ENCODE measurements at regions of chr3 and their contacts with region 1.

Region 1: GRCh38 chr3:38479431-38480092 is 16.6 kb upstream of the EXOG start:
- DNase-seq: peak; percentile 59 to 82 (median 79)
- ATAC-seq: peak; percentile 77 to 81
- H3K4me3 ChIP-seq: no peak overlapping the region
- H3K27ac ChIP-seq: no peak overlapping the region
- H3K4me1 ChIP-seq: no peaks in the 10 kb centered on the region
- H3K27me3 ChIP-seq: no peaks in the 10 kb centered on the region

Region 2: DNA sequence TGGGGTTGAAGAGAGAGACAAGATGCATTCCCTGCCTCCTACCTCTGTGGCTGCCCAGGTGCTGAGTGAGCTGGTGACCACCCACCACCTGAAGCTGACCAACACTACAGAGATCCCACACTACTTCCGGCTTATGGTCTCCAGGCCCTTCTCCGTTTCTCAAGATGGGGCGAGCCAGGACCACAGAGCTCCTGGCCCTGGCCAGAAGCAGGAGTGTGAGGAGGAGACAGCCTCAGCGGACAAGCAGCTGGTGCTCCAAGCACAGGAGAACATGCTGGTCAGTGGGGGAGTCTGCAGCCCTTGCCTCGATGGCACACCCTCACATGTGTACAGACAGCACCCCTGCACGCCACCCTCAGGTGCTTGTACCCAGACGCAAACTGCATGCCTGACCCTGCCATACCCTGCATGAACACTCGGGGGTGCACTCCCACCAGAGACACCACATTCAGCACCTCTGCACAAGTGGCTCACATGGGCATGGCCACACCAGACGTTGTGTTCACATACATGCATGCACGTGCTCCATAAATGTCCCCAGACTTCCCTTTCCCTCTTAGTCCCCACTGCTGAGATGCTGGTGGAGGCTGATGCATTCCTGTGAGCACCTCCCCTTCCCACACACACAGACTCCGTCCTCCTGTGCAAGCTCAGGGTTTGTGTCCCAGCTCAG is 361.7 kb before region 1 on chr3:
- intact Hi-C with region 1: loop called in 3 of 4 experiments (anchors 5 to 10 kb)
- DNase-seq: peak; percentile 58 to 81 (median 79)
- ATAC-seq: peak; percentile 64 to 71
- H3K4me3 ChIP-seq: no peak overlapping the region
- H3K27ac ChIP-seq: no peak overlapping the region
- H3K4me1 ChIP-seq: no peaks in the 10 kb centered on the region
- H3K27me3 ChIP-seq: no peaks in the 10 kb centered on the region

Region 3: GRCh38 chr3:38317155-38317759 is 162.3 kb before region 1 on chr3:
- intact Hi-C with region 1: no loop called
- DNase-seq: no peak
- ATAC-seq: peak in 1 of 2 donors; percentile 11
- H3K4me3 ChIP-seq: no peak overlapping the region
- H3K27ac ChIP-seq: no peak overlapping the region
- H3K4me1 ChIP-seq: no peaks in the 10 kb centered on the region
- H3K27me3 ChIP-seq: no peaks in the 10 kb centered on the region

Region 4: GRCh38 chr3:38346587-38347410 is 132.8 kb before region 1 on chr3 and contains the start of gene XYLB:
- intact Hi-C with region 1: loop called (anchors 2 to 10 kb)
- DNase-seq: peak; percentile 91 to 96 (median 95)
- ATAC-seq: peak; percentile 99
- H3K4me3 ChIP-seq: peak within 1 kb of the TSS; percentile 66
- H3K27ac ChIP-seq: no peak within 1 kb of the TSS
- H3K4me1 ChIP-seq: no peaks in the 10 kb centered on the region
- H3K27me3 ChIP-seq: no peaks in the 10 kb centered on the region
- total RNA-seq, gene XYLB: 0.37 to 1.3 (median 0.83) TPM

Region 5: DNA sequence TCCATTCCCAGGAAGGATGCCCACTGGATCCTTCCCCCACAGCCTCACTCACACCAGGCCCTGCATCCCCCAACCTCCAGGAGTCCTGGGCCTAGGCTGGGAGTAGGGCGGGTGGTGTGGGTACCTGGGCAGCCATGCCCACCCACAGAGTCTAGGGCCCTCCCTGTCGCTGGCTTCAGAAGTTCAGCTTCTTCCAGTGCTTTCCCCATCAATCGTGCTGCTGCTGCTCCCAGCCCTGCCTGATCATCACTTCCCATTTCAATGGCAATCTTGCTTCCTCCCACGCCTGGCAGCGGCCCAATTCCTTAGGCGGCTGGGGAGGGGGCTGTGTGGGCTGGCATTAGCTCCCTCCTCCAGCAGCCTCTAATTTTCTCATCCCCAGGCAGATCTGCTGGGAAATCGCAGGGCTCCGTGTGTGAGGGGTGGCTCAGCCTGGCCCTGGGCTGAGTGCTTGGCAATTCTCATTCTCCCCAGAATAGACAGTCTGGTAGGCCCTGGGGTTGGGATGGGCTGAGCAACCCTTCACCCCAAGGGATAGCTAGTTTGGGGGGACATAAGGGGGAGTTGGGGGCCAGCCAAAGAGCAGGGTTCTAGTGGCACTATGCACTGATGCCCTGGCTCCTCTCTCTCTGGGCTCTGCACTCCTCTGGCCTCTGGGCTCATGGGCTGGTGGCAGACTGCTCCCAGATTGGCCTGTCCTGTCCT is 103.5 kb after region 1 on chr3:
- intact Hi-C with region 1: no loop called
- DNase-seq: no peak
- ATAC-seq: no peak
- H3K4me3 ChIP-seq: no peak overlapping the region
- H3K27ac ChIP-seq: no peak overlapping the region
- H3K4me1 ChIP-seq: peaks cover 11% of the 10 kb centered on the region
- H3K27me3 ChIP-seq: no peaks in the 10 kb centered on the region

Region 6: DNA sequence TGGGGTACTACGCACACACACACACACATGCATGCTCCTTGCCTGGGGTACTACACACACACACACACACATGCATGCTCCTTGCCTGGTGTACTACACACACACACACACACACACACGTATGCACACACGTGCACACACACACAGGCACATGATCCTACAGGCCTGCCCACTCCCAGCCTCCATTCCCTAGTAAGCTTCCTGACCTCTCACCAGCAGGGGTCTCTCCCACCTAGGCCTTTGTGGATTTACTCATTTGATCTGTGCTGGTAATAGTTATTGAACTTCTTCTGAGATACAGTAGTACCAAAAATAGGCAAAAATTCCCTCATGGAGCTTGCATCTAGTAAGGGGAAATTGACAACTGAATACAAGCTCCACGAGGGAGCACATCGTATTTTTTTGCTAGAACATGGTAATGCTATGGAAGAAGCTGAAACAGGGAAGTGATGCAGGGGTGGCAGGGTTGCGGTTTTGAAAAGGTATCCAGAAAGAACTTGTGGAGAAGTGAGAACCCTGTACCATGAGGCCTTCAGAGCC is 647.0 kb after region 1 on chr3:
- intact Hi-C with region 1: no loop called
- DNase-seq: peak in 2 of 3 donors; percentile 75 to 81
- ATAC-seq: peak; percentile 70 to 84
- H3K4me3 ChIP-seq: no peak overlapping the region
- H3K27ac ChIP-seq: no peak overlapping the region
- H3K4me1 ChIP-seq: no peaks in the 10 kb centered on the region
- H3K27me3 ChIP-seq: no peaks in the 10 kb centered on the region

Measured in right cardiac atrium (tissue), 5 donors.